GM12878 (cell line): ENCODE measurements at regions of chr16 and their contacts with region 1.

Region 1: DNA sequence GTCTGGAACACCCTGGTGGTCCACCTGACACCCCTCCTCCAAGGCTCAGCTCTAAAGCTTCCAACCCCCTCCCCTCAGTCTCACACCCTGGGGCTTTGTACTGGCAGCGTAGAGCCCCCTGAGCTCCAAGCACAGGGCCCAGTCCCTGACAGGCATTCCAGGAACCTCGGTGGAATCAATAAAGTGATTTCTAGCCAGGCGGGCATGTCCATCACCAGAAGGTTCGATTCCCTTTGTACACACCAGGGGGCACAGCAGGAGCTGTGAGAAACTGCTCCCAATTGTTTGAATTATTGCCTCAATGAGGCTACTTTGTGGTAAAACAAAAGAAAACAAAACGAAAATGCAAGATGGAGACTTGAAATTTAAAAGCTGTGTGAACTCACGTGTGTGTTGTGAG is 51.8 kb downstream of the SMPD3 start:
- DNase-seq: no peak
- ATAC-seq: peak; percentile 74
- H3K4me3 ChIP-seq: no peak overlapping the region
- H3K27ac ChIP-seq: no peak overlapping the region
- H3K4me1 ChIP-seq: no peaks in the 10 kb centered on the region
- H3K27me3 ChIP-seq: no peaks in the 10 kb centered on the region
- CTCF ChIP-seq: peak; percentile 47 to 68 (median 63)
- EP300 ChIP-seq: no peak
- POLR2A ChIP-seq: no peak
- RAD21 ChIP-seq: peak; percentile 68

Region 2: GRCh38 chr16:68367030-68367429 is 29.5 kb before region 1 on chr16:
- CTCF ChIA-PET with region 1: interaction called, 14 read pairs
- POLR2A ChIA-PET with region 1: interaction called, 6 read pairs
- RAD21 ChIA-PET with region 1: interaction called, 5 read pairs
- SMC1A ChIA-PET with region 1: interaction called, 3 read pairs
- in situ Hi-C with region 1: no loop called
- intact Hi-C with region 1: no loop called
- DNase-seq: no peak
- ATAC-seq: peak; percentile 26
- H3K4me3 ChIP-seq: no peak overlapping the region
- H3K27ac ChIP-seq: no peak overlapping the region
- H3K4me1 ChIP-seq: peaks cover 42% of the 10 kb centered on the region
- H3K27me3 ChIP-seq: no peaks in the 10 kb centered on the region
- CTCF ChIP-seq: peak; percentile 34 to 42 (median 41); a peak in 5 of 6 replicates
- EP300 ChIP-seq: no peak
- POLR2A ChIP-seq: no peak
- RAD21 ChIP-seq: peak; percentile 34; the same call in 1 of the 2 replicates

Region 3: GRCh38 chr16:68406451-68407152 is 10.1 kb after region 1 on chr16:
- CTCF ChIA-PET with region 1: interaction called, 14 read pairs
- POLR2A ChIA-PET with region 1: no interaction called
- RAD21 ChIA-PET with region 1: no interaction called
- SMC1A ChIA-PET with region 1: interaction called, 7 read pairs
- in situ Hi-C with region 1: no loop called
- intact Hi-C with region 1: no loop called
- DNase-seq: no peak
- ATAC-seq: no peak
- H3K4me3 ChIP-seq: no peak overlapping the region
- H3K27ac ChIP-seq: no peak overlapping the region
- H3K4me1 ChIP-seq: no peaks in the 10 kb centered on the region
- H3K27me3 ChIP-seq: no peaks in the 10 kb centered on the region
- CTCF ChIP-seq: no peak
- EP300 ChIP-seq: no peak
- POLR2A ChIP-seq: no peak
- RAD21 ChIP-seq: no peak

Region 4: DNA sequence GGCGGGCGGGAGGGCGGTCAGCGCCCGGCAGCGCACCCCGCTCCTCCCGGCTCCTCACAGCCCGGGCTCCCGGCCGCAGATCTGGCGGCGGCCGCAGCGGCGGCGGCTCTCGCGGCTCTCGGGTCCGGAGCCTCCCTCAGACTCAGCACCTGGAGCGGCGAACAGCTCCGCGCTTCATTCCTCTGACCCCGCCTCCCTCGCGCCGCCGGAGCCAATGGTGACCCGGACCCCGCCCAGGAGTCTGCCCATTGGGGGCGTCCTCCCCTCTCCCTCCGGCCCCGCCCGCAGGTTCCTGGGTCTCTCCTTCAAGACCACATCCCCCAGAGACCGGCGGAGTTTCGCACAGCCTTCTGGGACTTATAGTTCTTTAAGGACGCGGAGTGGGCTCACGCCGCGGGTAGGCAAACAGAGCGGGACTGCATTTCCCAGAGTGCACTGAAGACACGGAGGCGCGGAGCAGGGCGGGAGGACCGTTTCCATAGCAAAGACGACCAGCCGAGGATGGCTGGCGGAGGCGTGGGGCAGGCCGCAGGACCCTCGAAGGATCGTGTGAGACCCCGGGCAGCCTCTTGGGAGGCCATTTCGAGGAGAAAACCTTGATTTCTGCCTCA is 52.0 kb after region 1 on chr16 and contains the start of gene SMPD3:
- CTCF ChIA-PET with region 1: interaction called, 13 read pairs
- POLR2A ChIA-PET with region 1: no interaction called
- RAD21 ChIA-PET with region 1: no interaction called
- SMC1A ChIA-PET with region 1: interaction called, 10 read pairs
- in situ Hi-C with region 1: no loop called
- intact Hi-C with region 1: no loop called
- DNase-seq: peak; percentile 86
- ATAC-seq: peak; percentile 97
- H3K4me3 ChIP-seq: peak within 1 kb of the TSS; percentile 52
- H3K27ac ChIP-seq: no peak within 1 kb of the TSS
- H3K4me1 ChIP-seq: no peaks in the 10 kb centered on the region
- H3K27me3 ChIP-seq: 0 out of 4 replicates have a peak, but pooled peaks cover 0 to 2% of the 10 kb centered on the region in 2 experiments
- CTCF ChIP-seq: no peak
- EP300 ChIP-seq: no peak
- POLR2A ChIP-seq: no peak
- RAD21 ChIP-seq: no peak
- polyA plus RNA-seq, gene SMPD3: 0.06 to 0.22 TPM

Region 5: GRCh38 chr16:68520649-68521086 is 124.2 kb after region 1 on chr16:
- CTCF ChIA-PET with region 1: interaction called, 14 read pairs
- POLR2A ChIA-PET with region 1: no interaction called
- RAD21 ChIA-PET with region 1: no interaction called
- SMC1A ChIA-PET with region 1: interaction called, 8 read pairs
- in situ Hi-C with region 1: no loop called
- intact Hi-C with region 1: no loop called
- DNase-seq: no peak
- ATAC-seq: peak; percentile 98
- H3K4me3 ChIP-seq: no peak overlapping the region
- H3K27ac ChIP-seq: no peak overlapping the region
- H3K4me1 ChIP-seq: no peaks in the 10 kb centered on the region; the same call in 1 of the 2 replicates
- H3K27me3 ChIP-seq: no peaks in the 10 kb centered on the region; a peak in 1 of 4 replicates
- CTCF ChIP-seq: peak; percentile 99 to 100 (median 100); a peak in 5 of 6 replicates
- EP300 ChIP-seq: peak in 1 of 2 experiments; percentile 25; a peak in 1 of 4 replicates
- POLR2A ChIP-seq: no peak
- RAD21 ChIP-seq: peak; percentile 55